Right ventricle myocardium inferior (tissue), 1 donor: ENCODE measurements at regions of chr4 and their contacts with region 1.

Region 1: GRCh38 chr4:185921583-185922555 is 109.9 kb upstream of the SORBS2 start:
- DNase-seq: no peak
- ATAC-seq: peak; percentile 7

Region 2: GRCh38 chr4:185369731-185370130 is 552.1 kb before region 1 on chr4:
- intact Hi-C with region 1: no loop called
- DNase-seq: no peak
- ATAC-seq: no peak

Region 3: DNA sequence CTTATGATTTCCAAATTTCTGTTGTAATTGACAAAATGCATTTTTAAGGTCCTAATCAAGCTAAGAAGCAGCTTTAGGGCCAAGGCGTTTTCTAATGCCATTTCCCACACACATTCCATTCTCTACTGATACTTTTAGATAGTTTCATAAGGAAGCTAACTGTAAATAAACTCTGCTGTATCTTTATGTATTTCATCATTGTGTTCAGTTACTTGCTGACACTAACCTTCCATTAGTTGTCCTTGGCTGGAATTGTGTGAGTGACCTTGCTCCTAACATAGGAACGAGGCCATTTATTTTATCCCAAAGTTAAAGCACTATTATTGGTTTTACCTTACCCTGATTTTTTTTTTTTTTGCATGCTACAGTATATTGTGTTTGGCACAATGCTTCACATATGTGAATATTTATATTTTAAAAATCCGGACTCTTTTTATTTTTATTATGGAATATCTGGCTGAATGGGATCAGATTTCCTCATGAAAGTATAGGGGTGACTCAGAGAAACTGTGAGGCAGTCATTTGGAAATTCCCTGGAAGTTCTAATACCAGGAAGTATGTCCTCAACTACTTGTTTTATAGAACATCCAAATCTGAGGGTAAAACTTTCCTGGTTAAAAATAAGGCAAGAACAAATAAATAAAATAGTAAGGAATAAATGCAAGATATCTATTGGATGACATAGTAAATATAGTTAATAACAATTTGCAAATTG is 47.2 kb before region 1 on chr4:
- intact Hi-C with region 1: loop called (anchors 5 kb)
- DNase-seq: no peak
- ATAC-seq: no peak

Region 4: GRCh38 chr4:185997296-185997695 is 75.4 kb after region 1 on chr4:
- intact Hi-C with region 1: loop called (anchors 5 kb)
- DNase-seq: peak; percentile 76
- ATAC-seq: peak; percentile 88

Region 5: GRCh38 chr4:186067757-186068385 is 146.0 kb after region 1 on chr4:
- intact Hi-C with region 1: no loop called
- DNase-seq: no peak
- ATAC-seq: peak; percentile 91

Region 6: DNA sequence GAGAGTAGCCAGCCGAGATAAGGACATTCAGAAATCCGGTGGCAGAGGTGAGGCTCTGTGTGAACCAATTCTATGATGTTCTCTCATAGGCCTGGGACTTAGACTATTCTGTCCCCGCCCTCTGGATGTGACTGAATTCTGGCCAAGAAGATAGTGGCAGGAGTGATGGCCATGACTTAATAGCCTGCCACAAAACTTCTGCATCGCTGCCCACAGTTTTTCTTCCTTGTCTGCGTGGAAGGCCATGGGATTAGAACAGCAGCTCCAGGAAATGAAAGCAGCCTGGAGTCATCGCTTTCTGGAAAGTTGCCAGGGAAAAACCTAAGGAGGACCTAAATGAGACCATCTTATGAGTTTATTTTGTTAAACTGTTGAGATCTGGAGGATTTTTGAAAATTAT is 478.8 kb after region 1 on chr4:
- intact Hi-C with region 1: no loop called
- DNase-seq: no peak
- ATAC-seq: no peak